Activated B cell treated with CpG ODN at 0.5 μM for 24 hours (primary cell): ENCODE measurements at regions of chr14 and their contacts with region 1.

Region 1: GRCh38 chr14:76672123-76672522 is 89.1 kb upstream of the VASH1 start:
- DNase-seq: no peak
- ATAC-seq: no peak
- H3K4me3 Mint-ChIP-seq: no peak overlapping the region
- H3K27ac Mint-ChIP-seq: no peak overlapping the region
- H3K4me1 Mint-ChIP-seq: no peaks in the 10 kb centered on the region
- H3K27me3 Mint-ChIP-seq: peaks cover 15% of the 10 kb centered on the region
- CTCF ChIP-seq: no peak

Region 2: GRCh38 chr14:76056128-76056527 is 616.0 kb before region 1 on chr14:
- CTCF ChIA-PET with region 1: no interaction called
- POLR2A ChIA-PET with region 1: interaction called, 10 read pairs
- intact Hi-C with region 1: no loop called
- DNase-seq: no peak
- ATAC-seq: no peak
- H3K4me3 Mint-ChIP-seq: no peak overlapping the region
- H3K27ac Mint-ChIP-seq: no peak overlapping the region
- H3K4me1 Mint-ChIP-seq: no peaks in the 10 kb centered on the region
- H3K27me3 Mint-ChIP-seq: no peaks in the 10 kb centered on the region
- CTCF ChIP-seq: no peak

Region 3: DNA sequence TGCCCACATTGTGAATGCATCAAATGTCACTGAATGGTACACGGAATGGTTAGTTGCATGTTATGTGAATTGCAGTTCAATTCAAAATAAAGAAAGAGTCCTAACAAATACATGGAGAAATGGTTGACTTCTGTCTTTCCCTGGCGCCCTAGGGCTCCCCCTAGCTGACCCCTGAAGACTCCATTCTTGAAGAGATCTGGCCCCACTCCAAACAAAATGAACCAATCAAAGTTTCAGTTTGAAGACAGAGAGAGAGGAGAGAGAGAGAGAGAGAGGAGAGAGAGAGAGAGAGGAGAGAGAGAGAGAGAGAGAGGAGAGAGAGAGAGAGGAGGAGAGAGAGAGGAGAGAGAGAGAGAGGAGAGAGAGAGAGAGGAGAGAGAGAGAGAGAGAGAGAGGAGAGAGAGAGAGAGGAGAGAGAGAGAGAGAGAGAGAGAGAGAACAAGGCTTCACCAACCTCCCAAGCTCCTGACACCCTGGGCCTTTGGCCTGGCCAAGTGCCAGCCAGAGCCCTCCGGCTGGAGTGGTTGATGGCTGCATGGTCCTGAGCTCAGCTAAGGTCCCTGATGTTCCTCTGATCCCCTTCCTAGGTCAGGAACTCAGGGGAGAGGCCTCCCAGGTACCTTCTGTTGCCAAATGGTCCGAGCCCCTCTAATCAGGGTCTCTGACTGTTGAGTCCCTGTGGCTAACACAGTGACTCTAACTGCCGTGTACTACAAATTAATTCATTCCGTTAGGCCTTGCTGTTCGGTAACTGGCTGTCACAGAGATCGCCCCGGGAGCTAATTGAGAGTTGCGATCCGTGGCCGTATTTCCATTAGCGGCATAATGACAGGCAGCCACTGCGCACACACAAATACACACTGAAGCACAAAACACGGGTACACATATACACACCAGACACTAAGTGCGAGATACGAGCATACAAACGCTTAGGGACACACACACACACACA is 107.4 kb before region 1 on chr14:
- CTCF ChIA-PET with region 1: no interaction called
- POLR2A ChIA-PET with region 1: no interaction called
- intact Hi-C with region 1: no loop called
- DNase-seq: no peak
- ATAC-seq: no peak
- H3K4me3 Mint-ChIP-seq: no peak overlapping the region
- H3K27ac Mint-ChIP-seq: no peak overlapping the region
- H3K4me1 Mint-ChIP-seq: no peaks in the 10 kb centered on the region
- H3K27me3 Mint-ChIP-seq: peaks cover 5% of the 10 kb centered on the region
- CTCF ChIP-seq: no peak